Dendritic cell treated with granulocyte-macrophage colony-stimulating factor and Interleukin-4, amounts not matched to agents 40 ng/mL and 50 ng/mL, for 4 days (primary cell): ENCODE measurements at regions of chr1 and their contacts with region 1.

Region 1: DNA sequence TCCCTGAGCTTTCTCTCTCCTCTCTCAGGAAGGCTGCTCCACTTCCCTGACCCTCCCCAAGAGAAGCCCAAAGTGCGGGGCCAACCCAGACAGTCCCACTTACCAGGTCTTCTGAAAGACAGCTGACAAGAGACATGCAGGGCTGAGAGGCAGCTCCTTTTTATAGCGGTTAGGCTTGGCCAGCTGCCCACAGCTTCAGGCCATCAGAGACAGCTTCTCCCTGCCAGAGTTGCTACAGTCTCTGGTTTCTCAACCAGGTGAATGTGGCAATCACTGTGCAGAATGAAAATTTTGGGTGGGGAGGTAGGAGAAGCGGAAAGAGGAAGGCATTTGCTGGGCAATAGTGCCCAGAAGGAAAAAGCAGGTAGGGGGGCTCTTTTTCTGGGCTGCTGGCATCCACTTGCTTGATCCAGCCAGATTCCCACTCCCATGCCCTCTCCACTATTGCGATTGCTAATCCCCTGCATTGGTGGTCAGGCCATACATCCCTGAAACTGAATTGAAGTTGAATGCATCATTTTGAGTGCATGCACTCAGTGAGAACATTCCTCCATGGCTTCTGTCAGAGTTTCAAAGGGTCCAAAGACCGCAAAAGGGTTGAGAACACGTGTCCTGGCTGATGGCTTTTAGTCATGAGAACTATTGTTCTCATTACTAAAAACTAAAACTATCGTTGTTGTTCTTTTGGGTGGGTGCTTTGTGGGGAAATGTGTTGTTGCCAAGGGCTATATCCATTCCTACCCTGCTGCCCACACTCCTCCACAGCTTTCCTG is at the start of gene S100A8:
- H3K4me3 Mint-ChIP-seq: peak within 1 kb of the TSS; percentile 42
- H3K27ac Mint-ChIP-seq: peak within 1 kb of the TSS; percentile 91
- H3K4me1 Mint-ChIP-seq: peaks cover 89% of the 10 kb centered on the region
- H3K27me3 Mint-ChIP-seq: peaks cover 2% of the 10 kb centered on the region

Region 2: GRCh38 chr1:153357853-153358690 is 33.1 kb before region 1 on chr1 and contains the start of gene S100A9:
- intact Hi-C with region 1: loop called (anchors 2 kb)
- H3K4me3 Mint-ChIP-seq: peak within 1 kb of the TSS; percentile 81
- H3K27ac Mint-ChIP-seq: peak within 1 kb of the TSS; percentile 94
- H3K4me1 Mint-ChIP-seq: peaks cover 69% of the 10 kb centered on the region
- H3K27me3 Mint-ChIP-seq: no peaks in the 10 kb centered on the region

Region 3: DNA sequence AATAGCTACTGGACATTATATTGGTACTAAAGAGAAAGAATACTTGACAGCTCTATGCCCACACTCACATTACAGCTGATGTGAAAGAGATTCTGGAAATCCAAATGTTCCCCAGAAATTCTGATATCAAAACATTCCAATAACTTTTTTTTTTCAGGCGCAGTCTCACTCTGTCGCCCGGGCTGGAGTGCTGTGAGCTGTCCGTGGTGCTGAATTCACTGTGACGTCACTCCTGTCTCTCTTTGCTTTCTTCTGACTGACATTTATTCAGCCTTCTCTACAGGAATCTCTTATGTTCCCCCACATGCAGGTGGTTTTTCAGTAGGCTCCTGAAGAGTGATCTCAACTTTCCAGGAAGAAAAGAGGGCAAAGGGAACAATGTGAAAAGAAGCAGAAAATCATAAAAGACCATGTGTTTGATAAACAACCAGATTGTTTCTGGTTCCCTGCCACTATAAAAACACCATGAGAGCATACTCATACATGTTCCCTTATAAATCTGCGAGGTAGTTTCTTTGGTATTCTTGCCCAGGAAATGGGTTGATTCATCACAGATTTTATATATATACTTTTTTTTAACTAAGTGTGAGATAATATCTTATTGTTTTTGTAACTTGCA is 31.4 kb after region 1 on chr1:
- intact Hi-C with region 1: no loop called
- H3K4me3 Mint-ChIP-seq: no peak overlapping the region
- H3K27ac Mint-ChIP-seq: no peak overlapping the region
- H3K4me1 Mint-ChIP-seq: no peaks in the 10 kb centered on the region
- H3K27me3 Mint-ChIP-seq: peaks cover 45% of the 10 kb centered on the region

Region 4: DNA sequence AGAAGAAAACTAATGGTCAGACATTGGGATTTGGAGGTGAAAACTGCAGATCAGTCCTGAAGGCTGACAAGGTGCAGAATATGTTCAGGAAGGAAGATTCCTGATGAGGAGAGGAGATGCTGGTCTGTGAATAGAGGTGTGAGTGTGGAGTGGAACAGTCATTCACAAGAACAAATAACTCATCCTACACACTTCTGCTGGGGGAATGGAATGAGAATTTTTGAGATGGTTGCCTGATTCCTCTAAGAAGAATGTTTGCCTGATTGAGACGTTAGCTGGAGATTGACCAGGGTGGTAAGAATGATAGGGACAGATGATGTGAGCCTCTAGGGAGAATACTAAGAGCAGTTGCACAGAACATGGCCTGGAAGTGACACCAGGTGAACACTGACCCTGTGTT is 65.3 kb after region 1 on chr1:
- intact Hi-C with region 1: no loop called
- H3K4me3 Mint-ChIP-seq: no peak overlapping the region
- H3K27ac Mint-ChIP-seq: no peak overlapping the region
- H3K4me1 Mint-ChIP-seq: no peaks in the 10 kb centered on the region
- H3K27me3 Mint-ChIP-seq: peaks cover 21% of the 10 kb centered on the region